ENCODE measurements at regions of chr19 and their contacts with region 1.

Region 1: GRCh38 chr19:49766007-49766937 is 529 bp upstream of the AP2A1 start:
- H3K4me3 ChIP-seq: peak overlapping the region; percentile 98
- H3K27ac ChIP-seq: peak overlapping the region; percentile 88
- H3K4me1 ChIP-seq: peaks cover 20% of the 10 kb centered on the region
- CTCF ChIP-seq: no peak

Region 2: GRCh38 chr19:49555600-49556411 is 210.5 kb before region 1 on chr19:
- CTCF ChIA-PET with region 1: no interaction called
- POLR2A ChIA-PET with region 1: no interaction called
- H3K4me3 ChIP-seq: no peak overlapping the region
- H3K27ac ChIP-seq: no peak overlapping the region
- H3K4me1 ChIP-seq: no peaks in the 10 kb centered on the region
- CTCF ChIP-seq: no peak

Region 3: GRCh38 chr19:49746206-49747091 is 19.8 kb before region 1 on chr19:
- CTCF ChIA-PET with region 1: no interaction called
- POLR2A ChIA-PET with region 1: interaction called, 12 read pairs
- H3K4me3 ChIP-seq: no peak overlapping the region
- H3K27ac ChIP-seq: no peak overlapping the region
- H3K4me1 ChIP-seq: no peaks in the 10 kb centered on the region
- CTCF ChIP-seq: no peak

Region 4: GRCh38 chr19:49812997-49813861 is 47.0 kb after region 1 on chr19 and contains the start of gene FUZ:
- CTCF ChIA-PET with region 1: no interaction called
- POLR2A ChIA-PET with region 1: interaction called, 15 read pairs
- H3K4me3 ChIP-seq: peak within 1 kb of the TSS; percentile 92
- H3K27ac ChIP-seq: peak within 1 kb of the TSS; percentile 67; the same call in 1 of the 2 replicates
- H3K4me1 ChIP-seq: peaks cover 2% of the 10 kb centered on the region; the same call in 1 of the 2 replicates
- CTCF ChIP-seq: peak; percentile 91

Region 5: DNA sequence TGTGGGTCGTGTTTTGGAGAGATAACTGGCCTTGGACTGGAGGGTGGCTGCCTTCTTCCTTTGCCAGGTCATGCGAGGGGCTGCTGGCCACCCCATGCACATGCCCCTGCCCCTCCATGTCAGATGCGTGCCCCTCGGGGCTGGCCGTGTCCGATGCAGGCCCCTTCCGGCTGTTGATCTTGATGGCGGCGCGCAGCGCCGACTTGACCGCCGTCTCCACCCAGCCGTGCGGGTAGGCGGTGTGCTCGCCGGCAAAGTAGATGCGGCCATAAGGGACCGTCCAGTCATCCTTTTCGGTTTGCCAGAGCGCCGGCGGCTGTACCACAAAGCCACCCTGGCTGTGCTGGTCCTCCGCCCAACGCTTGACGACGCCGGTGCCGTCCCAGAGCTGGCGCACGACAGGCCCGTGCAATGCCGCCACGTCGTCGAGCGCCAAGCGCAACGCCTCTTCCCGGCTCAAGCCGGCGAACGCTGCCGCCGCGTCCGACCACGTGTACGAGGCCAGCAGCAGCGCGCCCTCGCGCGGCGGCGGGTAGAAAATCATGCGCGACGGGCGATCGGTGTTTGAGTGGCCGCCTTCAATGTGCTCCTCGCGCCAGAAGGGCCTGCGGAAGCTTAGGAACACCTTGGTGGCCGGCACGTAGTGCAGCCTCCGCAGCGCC is 123.5 kb after region 1 on chr19:
- CTCF ChIA-PET with region 1: no interaction called
- POLR2A ChIA-PET with region 1: no interaction called
- H3K4me3 ChIP-seq: peak overlapping the region; percentile 32
- H3K27ac ChIP-seq: no peak overlapping the region
- H3K4me1 ChIP-seq: no peaks in the 10 kb centered on the region
- CTCF ChIP-seq: no peak

Measured in HEK293 (cell line).